Mucosa of descending colon (tissue), 3 donors: ENCODE measurements at regions of chr10 and their contacts with region 1.

Region 1: DNA sequence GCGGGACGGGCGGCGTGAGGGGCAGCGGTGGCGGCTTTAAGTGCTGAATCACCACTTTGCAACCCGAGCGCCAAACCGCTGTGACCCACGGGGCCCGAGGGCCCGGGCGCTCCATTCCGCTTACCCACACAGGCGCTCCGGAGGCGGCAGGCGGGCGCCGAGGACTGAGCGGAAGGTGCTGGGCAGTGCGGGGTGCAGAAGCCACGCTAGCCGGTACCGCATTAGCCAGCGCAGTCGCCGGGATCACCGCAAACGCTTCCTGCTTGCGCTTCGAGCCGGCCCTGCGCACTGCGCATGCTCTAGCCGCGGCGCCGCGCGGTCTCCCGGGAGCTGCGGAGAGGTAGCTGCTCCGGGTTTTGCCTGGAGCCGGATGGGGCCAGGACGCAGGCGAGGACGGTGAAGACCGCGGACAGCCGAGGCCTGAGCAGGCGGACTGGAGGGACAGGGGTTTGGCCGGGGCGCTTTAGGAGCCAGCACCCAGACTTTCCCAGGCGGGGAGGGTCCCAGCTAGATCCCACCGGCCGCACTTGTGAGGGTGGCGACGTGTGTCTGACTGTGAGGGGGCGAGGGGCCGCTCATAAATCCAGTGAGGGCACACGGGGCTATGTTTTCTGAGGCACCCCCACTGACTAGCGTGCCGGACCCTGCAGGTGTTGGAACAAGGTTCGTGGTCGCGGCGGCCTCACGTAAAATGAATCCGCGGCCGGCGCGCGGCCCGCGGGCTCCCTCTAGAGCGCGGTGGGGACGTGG is at the start of gene IDE:
- DNase-seq: peak; percentile 90 to 95 (median 94)
- ATAC-seq: peak; percentile 95
- H3K4me3 ChIP-seq: peak within 1 kb of the TSS; percentile 88
- H3K4me1 ChIP-seq: peaks cover 13% of the 10 kb centered on the region
- CTCF ChIP-seq: peak; percentile 84
- total RNA-seq, gene IDE: 36.6 to 48.7 (median 41.6) TPM

Region 2: GRCh38 chr10:92517034-92517655 is 56.8 kb before region 1 on chr10:
- intact Hi-C with region 1: loop called (anchors 1 to 5 kb)
- DNase-seq: peak in 1 of 3 donors; percentile 87
- ATAC-seq: peak; percentile 89
- H3K4me3 ChIP-seq: no peak overlapping the region
- H3K4me1 ChIP-seq: no peaks in the 10 kb centered on the region
- CTCF ChIP-seq: peak; percentile 69

Region 3: GRCh38 chr10:92627845-92628480 is 54.0 kb after region 1 on chr10:
- intact Hi-C with region 1: no loop called
- DNase-seq: no peak
- ATAC-seq: no peak
- H3K4me3 ChIP-seq: no peak overlapping the region
- H3K4me1 ChIP-seq: no peaks in the 10 kb centered on the region
- CTCF ChIP-seq: no peak

Region 4: GRCh38 chr10:92657024-92657423 is 83.1 kb after region 1 on chr10:
- intact Hi-C with region 1: no loop called
- DNase-seq: no peak
- ATAC-seq: no peak
- H3K4me3 ChIP-seq: no peak overlapping the region
- H3K4me1 ChIP-seq: no peaks in the 10 kb centered on the region
- CTCF ChIP-seq: no peak

Region 5: DNA sequence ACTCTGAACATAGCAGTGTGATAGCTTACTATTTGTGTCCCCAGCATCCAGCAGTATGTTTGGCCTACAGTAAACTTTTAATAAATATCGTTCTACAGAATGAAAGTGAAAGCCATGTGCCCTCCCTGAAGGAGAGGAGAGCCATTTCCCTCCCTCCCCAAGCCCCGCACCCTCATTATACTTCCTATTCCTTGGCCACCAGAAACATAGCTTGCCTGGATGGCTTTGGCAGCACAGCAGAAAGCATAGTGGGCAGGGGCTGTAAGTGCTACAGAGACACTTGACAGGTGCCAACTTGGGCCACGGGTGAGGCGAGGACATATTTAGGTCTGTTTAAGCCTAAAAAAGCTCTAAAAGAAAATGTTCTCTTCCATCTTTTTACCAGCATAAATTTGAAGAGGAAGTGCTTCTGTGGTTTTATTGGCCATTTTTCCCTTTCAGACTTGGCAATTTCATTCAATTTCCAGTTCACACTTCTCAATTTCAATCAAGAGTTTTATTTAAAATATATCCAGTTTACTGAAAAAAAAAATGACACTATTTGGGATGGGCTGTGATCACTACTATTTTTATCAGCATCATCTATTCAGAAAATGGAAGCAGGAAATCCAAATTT is 128.4 kb after region 1 on chr10:
- intact Hi-C with region 1: no loop called
- DNase-seq: no peak
- ATAC-seq: no peak
- H3K4me3 ChIP-seq: no peak overlapping the region
- H3K4me1 ChIP-seq: peaks cover 3% of the 10 kb centered on the region
- CTCF ChIP-seq: no peak